ENCODE measurements at regions of chr1 and their contacts with region 1.

Region 1: GRCh38 chr1:17439250-17440073 is at the start of gene RCC2:
- DNase-seq: peak; percentile 75 to 82
- ATAC-seq: peak; percentile 69 to 80 (median 76)
- H3K4me3 ChIP-seq: peak within 1 kb of the TSS; percentile 93
- H3K27ac ChIP-seq: peak within 1 kb of the TSS; percentile 84
- H3K4me1 ChIP-seq: peaks cover 23% of the 10 kb centered on the region
- H3K27me3 ChIP-seq: no peaks in the 10 kb centered on the region
- CTCF ChIP-seq: peak; percentile 36
- total RNA-seq, gene RCC2: 9.4 to 18.7 (median 12.1) TPM

Region 2: DNA sequence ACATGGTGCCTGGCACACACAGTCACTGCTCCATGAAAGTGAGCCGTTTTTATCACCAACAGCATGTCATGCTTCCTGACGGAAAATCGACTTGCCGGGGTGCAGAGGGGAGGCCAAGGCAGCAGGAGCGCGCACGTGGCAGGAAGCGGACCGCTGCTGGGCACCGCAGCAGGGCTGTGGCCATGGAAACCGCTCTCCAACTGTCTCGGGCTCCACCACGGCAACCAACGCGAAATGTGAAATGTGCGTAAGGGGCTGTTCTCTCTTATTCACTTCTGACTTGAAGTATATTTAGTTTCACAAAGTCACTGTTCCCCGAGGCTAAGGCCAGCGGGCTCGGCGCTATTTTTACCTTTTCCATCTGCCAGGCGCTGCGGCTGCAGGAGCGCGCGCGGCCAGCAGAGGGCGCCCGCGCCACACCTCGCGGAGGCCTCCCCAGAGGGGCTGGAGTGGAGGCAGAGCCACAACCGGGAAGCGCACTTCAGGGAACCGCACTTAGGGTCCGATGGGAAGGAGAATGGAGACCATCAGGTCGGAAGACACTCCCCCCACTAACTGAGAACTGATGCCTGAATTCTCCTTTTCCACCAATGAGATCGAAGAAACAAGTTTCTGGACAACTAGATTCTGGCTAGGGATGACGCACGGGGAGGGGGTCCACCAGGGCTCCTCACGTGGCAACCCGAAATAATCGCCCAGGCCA is 19.7 kb before region 1 on chr1:
- intact Hi-C with region 1: loop called in 1 of 2 experiments (anchors 1 kb)
- DNase-seq: peak; percentile 73 to 87
- ATAC-seq: peak; percentile 92 to 96 (median 94)
- H3K4me3 ChIP-seq: peak overlapping the region; percentile 24
- H3K27ac ChIP-seq: peak overlapping the region; percentile 72
- H3K4me1 ChIP-seq: peaks cover 5% of the 10 kb centered on the region
- H3K27me3 ChIP-seq: no peaks in the 10 kb centered on the region
- CTCF ChIP-seq: peak; percentile 100

Region 3: DNA sequence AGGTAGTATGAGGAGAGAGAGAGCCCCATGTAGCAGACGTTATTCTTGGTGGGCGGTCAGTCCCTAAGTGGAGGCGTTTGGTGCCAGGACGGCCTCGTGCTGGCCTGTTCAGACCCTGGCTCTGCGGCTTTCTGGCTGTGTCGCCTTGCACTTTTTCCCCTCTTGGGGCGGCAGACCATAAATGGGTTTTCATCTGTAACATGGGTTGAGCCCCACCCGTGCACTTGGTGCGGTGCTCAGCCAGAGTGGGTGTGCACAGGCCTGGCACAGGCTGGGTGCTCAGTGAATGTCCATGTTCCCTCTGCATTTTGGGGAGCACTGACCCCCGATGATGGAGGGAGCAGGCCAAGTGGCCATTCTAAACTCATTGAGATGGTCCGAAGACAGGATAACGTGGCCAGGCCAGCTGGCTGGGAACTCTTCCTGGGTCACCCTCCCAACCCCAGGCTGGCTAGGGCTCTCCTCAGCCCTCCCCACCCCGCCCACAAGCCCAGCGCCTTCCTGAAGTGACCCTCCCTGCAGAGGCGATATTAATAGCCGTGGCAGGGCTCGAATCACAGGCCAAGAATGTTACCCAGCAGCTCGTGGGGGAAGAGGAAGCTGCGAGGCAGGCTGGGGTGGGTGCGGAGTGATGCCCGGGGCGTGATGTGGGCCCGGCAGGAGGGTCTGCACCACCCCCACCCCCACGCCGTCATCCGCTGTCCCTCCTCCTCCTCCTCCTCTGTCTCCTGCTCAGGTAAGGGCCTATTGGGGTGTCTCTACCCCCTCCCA is 178.5 kb after region 1 on chr1:
- intact Hi-C with region 1: loop called in 1 of 2 experiments (anchors 10 kb)
- DNase-seq: peak; percentile 77 to 91
- ATAC-seq: peak; percentile 89 to 93 (median 90)
- H3K4me3 ChIP-seq: peak overlapping the region; percentile 75
- H3K27ac ChIP-seq: peak overlapping the region; percentile 93
- H3K4me1 ChIP-seq: peaks cover 19% of the 10 kb centered on the region
- H3K27me3 ChIP-seq: no peaks in the 10 kb centered on the region
- CTCF ChIP-seq: no peak